ENCODE measurements at regions of chr10 and their contacts with region 1.

Region 1: DNA sequence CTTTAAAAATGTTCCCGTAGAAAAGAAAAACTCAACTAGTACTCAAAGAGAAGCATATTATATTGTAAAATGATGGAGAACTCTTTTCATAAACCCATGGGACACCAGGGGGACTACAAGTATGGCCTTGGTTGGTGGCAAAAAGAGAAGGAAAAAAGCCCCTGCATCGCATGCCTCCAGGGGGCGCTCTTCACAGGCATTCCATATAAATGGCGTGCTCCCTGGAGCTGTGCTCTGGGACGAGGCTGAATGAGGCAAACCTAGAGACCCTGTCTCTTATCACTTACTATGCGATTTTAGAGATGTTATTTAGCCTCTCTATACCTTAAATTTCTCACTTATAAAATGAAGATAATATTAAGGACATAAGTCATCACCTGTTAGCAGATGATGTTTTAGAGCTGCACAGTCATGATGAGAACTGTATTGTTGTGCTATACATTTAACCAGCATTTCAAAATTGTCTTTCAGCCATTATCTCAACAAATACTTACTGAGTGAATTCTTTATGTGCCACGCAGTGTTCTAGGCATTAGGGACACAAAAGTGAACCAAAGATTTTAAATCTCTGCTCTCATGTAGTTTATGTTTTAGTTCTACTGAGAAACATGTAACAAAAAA is 105.8 kb downstream of the ARHGAP21 start:
- DNase-seq: peak; percentile 45 to 78
- ATAC-seq: peak; percentile 88 to 95
- H3K4me3 ChIP-seq: no peak overlapping the region
- H3K27ac ChIP-seq: no peak overlapping the region
- H3K4me1 ChIP-seq: peaks cover 16% of the 10 kb centered on the region; the same call in 2 of the 3 replicates
- CTCF ChIP-seq: peak; percentile 87
- EP300 ChIP-seq: no peak
- POLR2A ChIP-seq: no peak
- RAD21 ChIP-seq: peak; percentile 46 to 63; a peak in 4 of 5 replicates

Region 2: DNA sequence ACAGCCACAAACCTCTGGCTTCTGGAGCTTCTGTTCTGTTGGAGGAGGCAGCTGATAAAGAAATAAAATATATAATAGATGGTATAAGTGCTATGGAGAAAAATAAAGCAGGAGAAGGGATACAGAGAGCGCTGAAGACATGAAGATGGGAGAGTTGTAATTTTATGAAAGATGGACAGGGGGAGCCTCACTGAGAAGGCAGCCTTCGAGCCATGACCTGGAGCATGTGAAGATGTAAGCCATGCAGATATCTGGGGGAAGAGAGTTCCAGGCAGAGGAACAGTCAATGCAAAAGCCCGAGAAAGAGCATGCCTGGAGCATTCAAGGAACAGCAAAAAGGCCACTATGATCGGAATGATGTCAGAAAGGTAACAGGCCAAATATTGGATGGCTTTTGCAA is 221.5 kb before region 1 on chr10:
- CTCF ChIA-PET with region 1: no interaction called
- POLR2A ChIA-PET with region 1: no interaction called
- DNase-seq: peak in 1 of 2 experiments; percentile 11
- ATAC-seq: no peak
- H3K4me3 ChIP-seq: no peak overlapping the region
- H3K27ac ChIP-seq: no peak overlapping the region
- H3K4me1 ChIP-seq: no peaks in the 10 kb centered on the region
- CTCF ChIP-seq: no peak
- EP300 ChIP-seq: no peak
- POLR2A ChIP-seq: no peak
- RAD21 ChIP-seq: no peak

Region 3: GRCh38 chr10:24541239-24542048 is 76.4 kb before region 1 on chr10:
- CTCF ChIA-PET with region 1: no interaction called
- POLR2A ChIA-PET with region 1: no interaction called
- DNase-seq: peak in 1 of 2 experiments; percentile 48
- ATAC-seq: peak in 1 of 2 experiments; percentile 62; a peak in 3 of 6 replicates
- H3K4me3 ChIP-seq: no peak overlapping the region
- H3K27ac ChIP-seq: no peak overlapping the region
- H3K4me1 ChIP-seq: no peaks in the 10 kb centered on the region
- CTCF ChIP-seq: no peak
- EP300 ChIP-seq: no peak
- POLR2A ChIP-seq: no peak
- RAD21 ChIP-seq: no peak

Region 4: GRCh38 chr10:24579906-24580305 is 38.0 kb before region 1 on chr10:
- CTCF ChIA-PET with region 1: no interaction called
- POLR2A ChIA-PET with region 1: no interaction called
- DNase-seq: no peak
- ATAC-seq: no peak; a peak in 1 of 6 replicates
- H3K4me3 ChIP-seq: no peak overlapping the region
- H3K27ac ChIP-seq: no peak overlapping the region
- H3K4me1 ChIP-seq: no peaks in the 10 kb centered on the region
- CTCF ChIP-seq: no peak
- EP300 ChIP-seq: no peak
- POLR2A ChIP-seq: no peak
- RAD21 ChIP-seq: no peak

Region 5: DNA sequence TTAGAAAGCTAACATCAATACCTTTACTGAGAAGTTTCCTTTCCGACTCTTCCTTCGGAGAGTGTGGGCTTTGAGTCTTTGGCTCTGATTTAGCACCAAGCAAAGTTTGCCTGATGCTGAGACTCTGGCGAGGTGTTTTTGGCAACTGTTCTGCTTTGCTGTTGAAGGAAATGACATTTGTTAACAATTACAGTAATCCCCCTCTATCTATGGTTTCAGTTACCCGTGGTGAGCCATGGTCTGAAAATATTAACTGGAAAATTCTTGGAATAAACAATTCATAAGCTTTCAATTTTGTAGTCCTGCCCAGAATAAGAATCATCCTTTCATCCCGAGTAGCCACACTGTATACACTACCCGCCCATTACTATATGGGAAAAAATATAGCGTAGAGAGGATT is 20.5 kb before region 1 on chr10:
- CTCF ChIA-PET with region 1: interaction called, 11 read pairs
- POLR2A ChIA-PET with region 1: no interaction called
- DNase-seq: no peak
- ATAC-seq: no peak
- H3K4me3 ChIP-seq: no peak overlapping the region
- H3K27ac ChIP-seq: no peak overlapping the region
- H3K4me1 ChIP-seq: no peaks in the 10 kb centered on the region
- CTCF ChIP-seq: no peak
- EP300 ChIP-seq: no peak
- POLR2A ChIP-seq: no peak
- RAD21 ChIP-seq: no peak

Region 6: DNA sequence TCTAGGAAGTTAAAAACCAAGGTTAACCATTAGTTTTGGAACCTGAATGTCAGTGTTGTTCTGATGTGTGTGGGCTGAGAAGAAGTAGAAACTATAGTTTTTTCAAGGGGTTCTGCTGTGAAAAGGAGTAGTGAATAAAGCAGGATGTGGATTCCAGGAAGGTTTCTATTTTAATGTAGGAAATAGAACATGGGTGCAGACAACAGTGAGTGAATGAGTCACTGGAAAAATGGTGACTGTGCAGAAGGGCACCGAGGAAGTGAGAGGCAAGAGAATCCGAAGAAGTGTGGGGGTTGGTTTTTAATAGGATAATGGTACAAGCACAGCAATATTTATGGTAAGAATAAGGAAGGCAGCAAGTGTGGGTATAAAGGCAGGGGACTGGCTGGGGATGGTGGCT is 14.5 kb before region 1 on chr10:
- CTCF ChIA-PET with region 1: interaction called, 22 read pairs
- POLR2A ChIA-PET with region 1: no interaction called
- DNase-seq: peak in 1 of 2 experiments; percentile 19
- ATAC-seq: peak in 1 of 2 experiments; percentile 44; a peak in 2 of 6 replicates
- H3K4me3 ChIP-seq: no peak overlapping the region
- H3K27ac ChIP-seq: 0 out of 6 replicates have a peak overlapping the region, but pooled peaks of 1 of the 2 experiments have one; percentile 10
- H3K4me1 ChIP-seq: peaks cover 6% of the 10 kb centered on the region; the same call in 2 of the 3 replicates
- CTCF ChIP-seq: no peak
- EP300 ChIP-seq: no peak
- POLR2A ChIP-seq: no peak
- RAD21 ChIP-seq: no peak

Measured in A549 (cell line).